ENCODE measurements at regions of chr22 and their contacts with region 1.

Region 1: GRCh38 chr22:30089655-30089974 is 9.4 kb downstream of the HORMAD2 start:
- DNase-seq: no peak
- ATAC-seq: no peak

Region 2: GRCh38 chr22:29635734-29636357 is 453.8 kb before region 1 on chr22:
- intact Hi-C with region 1: loop called in 1 of 2 experiments (anchors 5 kb)
- DNase-seq: no peak
- ATAC-seq: peak; percentile 38 to 61

Region 3: DNA sequence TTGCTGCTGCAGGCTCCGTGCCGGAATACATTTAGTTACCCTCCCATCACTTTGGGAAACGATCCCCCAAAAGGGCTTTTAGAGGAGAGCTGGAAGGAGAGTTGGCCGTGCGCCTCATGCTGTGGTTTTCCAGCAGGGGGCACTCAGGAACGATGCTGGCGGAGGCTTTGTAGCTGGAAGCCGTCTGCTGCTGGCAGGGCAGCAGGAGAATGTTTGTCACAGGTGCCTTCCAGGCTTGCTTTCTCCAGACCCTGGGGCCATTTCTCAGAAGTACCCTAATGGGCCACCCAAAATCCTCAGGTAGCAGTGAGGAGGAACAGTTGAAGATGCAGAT is 399.8 kb before region 1 on chr22:
- intact Hi-C with region 1: loop called in 1 of 2 experiments (anchors 5 kb)
- DNase-seq: peak; percentile 58
- ATAC-seq: peak; percentile 54 to 66

Region 4: DNA sequence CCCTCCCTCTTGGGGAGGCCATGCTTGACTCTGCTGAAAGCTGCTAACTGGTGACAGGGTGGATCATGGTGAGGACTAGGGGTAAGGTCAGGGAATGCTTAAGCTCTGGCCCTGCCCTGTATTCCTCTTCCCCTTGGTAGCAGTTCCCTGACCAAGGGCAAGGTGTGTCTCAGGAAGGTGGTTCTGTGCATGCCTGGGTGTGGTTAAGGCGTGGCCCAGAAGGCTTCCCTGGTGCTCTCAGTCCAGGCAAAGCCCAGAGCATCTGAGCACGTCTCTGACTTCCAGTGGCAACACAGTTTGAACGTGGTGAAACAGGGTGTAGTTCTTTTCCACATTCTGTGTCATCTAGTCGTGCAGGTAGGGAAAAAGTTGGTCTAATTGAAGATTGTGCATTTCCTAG is 62.4 kb before region 1 on chr22:
- intact Hi-C with region 1: no loop called
- DNase-seq: no peak
- ATAC-seq: no peak